Aorta (tissue), 5 donors: ENCODE measurements at regions of chr11 and their contacts with region 1.

Region 1: GRCh38 chr11:61129639-61130523 is 27.6 kb downstream of the CD5 start:
- DNase-seq: peak; percentile 91 to 95
- ATAC-seq: peak; percentile 88
- H3K4me3 ChIP-seq: no peak overlapping the region
- H3K27ac ChIP-seq: no peak overlapping the region
- H3K4me1 ChIP-seq: no peaks in the 10 kb centered on the region
- H3K27me3 ChIP-seq: no peaks in the 10 kb centered on the region

Region 2: GRCh38 chr11:61187505-61188130 is 57.7 kb after region 1 on chr11:
- intact Hi-C with region 1: loop called (anchors 2 to 5 kb)
- DNase-seq: peak; percentile 77 to 88
- ATAC-seq: peak; percentile 77
- H3K4me3 ChIP-seq: no peak overlapping the region
- H3K27ac ChIP-seq: no peak overlapping the region
- H3K4me1 ChIP-seq: no peaks in the 10 kb centered on the region
- H3K27me3 ChIP-seq: no peaks in the 10 kb centered on the region